ENCODE measurements at regions of chr1 and their contacts with region 1.

Region 1: DNA sequence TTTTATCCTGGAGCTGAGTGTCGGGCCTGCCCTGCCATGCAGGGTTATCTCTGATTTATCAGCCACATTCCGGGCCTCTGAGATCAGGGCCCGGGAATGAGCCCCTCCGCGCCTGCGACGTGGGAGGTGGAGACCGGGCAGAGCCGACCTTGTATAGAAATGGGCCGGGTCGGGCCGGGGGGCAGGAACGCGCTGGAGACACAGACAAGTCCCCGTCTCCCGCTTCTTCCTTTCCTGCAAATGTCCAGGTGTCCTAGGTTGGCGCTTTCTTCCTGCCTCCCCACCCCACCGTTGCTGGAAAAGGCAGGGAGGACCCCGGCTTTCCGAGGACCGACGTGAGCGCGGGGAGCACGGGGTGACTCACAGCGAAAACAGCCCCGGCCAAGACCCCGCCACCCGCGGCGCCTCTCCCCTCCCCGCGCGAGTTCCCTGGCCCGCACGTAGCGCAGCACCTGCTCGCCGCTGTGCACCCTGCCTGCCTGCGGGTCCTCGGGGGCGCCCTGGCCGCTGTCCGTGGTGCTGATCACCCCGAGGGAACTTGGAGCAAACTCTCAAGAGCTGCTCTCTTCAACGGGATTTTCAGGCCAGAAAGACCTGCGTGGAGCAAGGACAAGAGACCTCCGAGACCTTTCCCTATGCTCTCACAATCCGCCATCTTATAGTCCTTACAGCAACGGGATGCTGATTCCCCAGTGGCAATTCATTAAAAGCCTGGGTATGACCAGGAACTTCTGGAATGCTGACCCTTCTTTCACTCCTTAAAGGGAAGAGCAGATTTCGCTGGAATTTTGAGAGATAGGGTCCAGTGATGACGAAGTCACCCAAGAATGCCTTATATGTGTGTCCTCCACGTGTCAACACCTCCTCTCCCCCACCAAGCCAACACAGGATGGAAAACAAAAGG is 475 bp upstream of the NPPB start:
- DNase-seq: peak in 1 of 2 experiments; percentile 94
- H3K4me3 ChIP-seq: peak overlapping the region in 3 of 4 experiments; percentile 3 to 51 (median 14); a peak in 4 of 8 replicates
- H3K27ac ChIP-seq: no peak overlapping the region
- H3K4me1 ChIP-seq: peaks cover 0 to 3% (median 1%) of the 10 kb centered on the region in 4 experiments; a peak in 1 of 7 replicates
- H3K27me3 ChIP-seq: peaks cover 0 to 22% (median 13%) of the 10 kb centered on the region in 4 experiments; a peak in 6 of 7 replicates
- CTCF ChIP-seq: peak; percentile 39 to 52 (median 42)
- EP300 ChIP-seq: no peak
- POLR2A ChIP-seq: no peak
- RAD21 ChIP-seq: peak in 1 of 2 experiments; percentile 9; a peak in 2 of 4 replicates

Region 2: GRCh38 chr1:11845641-11846335 is 13.4 kb before region 1 on chr1:
- CTCF ChIA-PET with region 1: interaction called, 18 read pairs
- POLR2A ChIA-PET with region 1: interaction called, 7 read pairs
- DNase-seq: no peak
- H3K4me3 ChIP-seq: no peak overlapping the region
- H3K27ac ChIP-seq: no peak overlapping the region
- H3K4me1 ChIP-seq: no peaks in the 10 kb centered on the region
- H3K27me3 ChIP-seq: no peaks in the 10 kb centered on the region
- CTCF ChIP-seq: peak in 1 of 3 experiments; percentile 18; a peak in 1 of 4 replicates
- EP300 ChIP-seq: no peak
- POLR2A ChIP-seq: no peak
- RAD21 ChIP-seq: no peak

Region 3: DNA sequence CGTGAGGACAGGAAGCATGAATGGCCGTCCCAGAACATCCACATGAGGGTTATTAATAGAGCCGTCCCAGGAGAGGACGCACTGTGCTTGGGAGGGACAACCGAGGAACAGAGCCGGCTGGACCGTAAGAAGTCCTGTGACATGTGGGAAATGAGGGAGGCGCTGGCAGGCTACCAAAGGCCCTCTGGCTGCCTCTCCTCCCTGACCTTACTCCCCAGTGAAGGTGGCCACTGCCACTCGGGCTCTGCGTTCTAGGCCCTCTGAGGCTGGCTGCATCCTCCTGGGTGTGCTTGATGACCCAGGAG is 15.0 kb after region 1 on chr1:
- CTCF ChIA-PET with region 1: interaction called, 21 read pairs
- POLR2A ChIA-PET with region 1: interaction called, 4 read pairs
- DNase-seq: no peak
- H3K4me3 ChIP-seq: no peak overlapping the region
- H3K27ac ChIP-seq: no peak overlapping the region
- H3K4me1 ChIP-seq: no peaks in the 10 kb centered on the region
- H3K27me3 ChIP-seq: no peaks in the 10 kb centered on the region
- CTCF ChIP-seq: no peak
- EP300 ChIP-seq: no peak
- POLR2A ChIP-seq: no peak
- RAD21 ChIP-seq: no peak

Region 4: GRCh38 chr1:11882814-11883538 is 23.8 kb after region 1 on chr1:
- CTCF ChIA-PET with region 1: interaction called, 27 read pairs
- POLR2A ChIA-PET with region 1: interaction called, 5 read pairs
- DNase-seq: no peak
- H3K4me3 ChIP-seq: no peak overlapping the region
- H3K27ac ChIP-seq: no peak overlapping the region
- H3K4me1 ChIP-seq: peaks cover 0 to 10% (median 8%) of the 10 kb centered on the region in 4 experiments; a peak in 6 of 7 replicates
- H3K27me3 ChIP-seq: no peaks in the 10 kb centered on the region
- CTCF ChIP-seq: no peak
- EP300 ChIP-seq: no peak
- POLR2A ChIP-seq: no peak
- RAD21 ChIP-seq: no peak

Measured in H1 (cell line).